ENCODE measurements at regions of chr16 and their contacts with region 1.

Region 1: GRCh38 chr16:57519796-57520360 is 16.5 kb downstream of the CCDC102A start:
- DNase-seq: peak; percentile 64
- ATAC-seq: peak; percentile 90
- H3K4me3 ChIP-seq: no peak overlapping the region
- H3K27ac ChIP-seq: no peak overlapping the region
- H3K4me1 ChIP-seq: no peaks in the 10 kb centered on the region
- H3K27me3 ChIP-seq: no peaks in the 10 kb centered on the region
- CTCF ChIP-seq: peak; percentile 93

Region 2: DNA sequence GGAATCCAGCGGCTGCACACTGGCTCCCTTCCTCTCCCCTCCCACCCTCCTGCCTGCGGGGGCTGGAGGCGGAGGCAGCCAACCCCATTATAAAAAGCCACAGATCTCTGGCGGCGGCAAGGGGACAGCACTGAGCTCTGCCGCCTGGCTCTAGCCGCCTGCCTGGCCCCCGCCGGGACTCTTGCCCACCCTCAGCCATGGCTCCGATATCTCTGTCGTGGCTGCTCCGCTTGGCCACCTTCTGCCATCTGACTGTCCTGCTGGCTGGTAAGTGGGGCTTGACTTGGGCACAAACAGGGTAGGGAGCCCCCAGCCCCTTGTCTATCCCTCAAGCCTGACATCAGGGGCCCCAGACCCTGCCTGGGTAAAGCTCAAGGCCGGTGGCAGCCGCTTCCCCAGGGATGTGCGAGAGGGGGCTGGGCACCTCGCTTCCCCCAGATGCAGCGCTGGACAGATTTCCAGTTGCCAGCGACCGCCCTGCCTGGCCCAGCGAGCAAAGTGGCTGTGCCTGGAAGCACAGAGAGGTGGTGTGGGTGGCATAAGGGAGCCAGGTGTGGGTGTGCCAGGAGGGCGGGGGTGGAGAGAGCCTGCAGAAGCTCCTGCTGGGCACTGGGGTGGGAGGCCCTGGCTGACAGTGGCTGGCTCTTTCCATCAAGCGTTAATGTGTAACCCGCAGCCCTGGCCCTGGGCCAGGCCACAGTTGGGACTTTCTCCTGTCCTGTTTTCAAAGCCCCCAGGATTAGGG is 147.3 kb before region 1 on chr16 and contains the start of gene CX3CL1:
- CTCF ChIA-PET with region 1: no interaction called
- POLR2A ChIA-PET with region 1: no interaction called
- intact Hi-C with region 1: no loop called
- DNase-seq: no peak
- ATAC-seq: no peak
- H3K4me3 ChIP-seq: no peak within 1 kb of the TSS
- H3K27ac ChIP-seq: no peak within 1 kb of the TSS
- H3K4me1 ChIP-seq: peaks cover 16% of the 10 kb centered on the region
- H3K27me3 ChIP-seq: no peaks in the 10 kb centered on the region
- CTCF ChIP-seq: no peak
- total RNA-seq, gene CX3CL1: 0.35 TPM in 1 of 2 replicates, not detected in the other

Region 3: GRCh38 chr16:57422026-57422944 is 97.6 kb before region 1 on chr16:
- CTCF ChIA-PET with region 1: interaction called, 3 read pairs
- POLR2A ChIA-PET with region 1: no interaction called
- intact Hi-C with region 1: loop called (anchors 2 kb)
- DNase-seq: peak; percentile 69
- ATAC-seq: peak; percentile 55
- H3K4me3 ChIP-seq: no peak overlapping the region
- H3K27ac ChIP-seq: no peak overlapping the region
- H3K4me1 ChIP-seq: peaks cover 5% of the 10 kb centered on the region
- H3K27me3 ChIP-seq: no peaks in the 10 kb centered on the region
- CTCF ChIP-seq: peak; percentile 79